Panc1 (cell line): ENCODE measurements at regions of chr7 and their contacts with region 1.

Region 1: GRCh38 chr7:31192986-31193385 is 140.9 kb downstream of the ADCYAP1R1 start:
- DNase-seq: peak; percentile 22
- ATAC-seq: peak; percentile 99
- H3K4me3 ChIP-seq: no peak overlapping the region
- H3K27ac ChIP-seq: no peak overlapping the region
- H3K4me1 ChIP-seq: no peaks in the 10 kb centered on the region
- H3K27me3 ChIP-seq: no peaks in the 10 kb centered on the region
- CTCF ChIP-seq: peak; percentile 96

Region 2: DNA sequence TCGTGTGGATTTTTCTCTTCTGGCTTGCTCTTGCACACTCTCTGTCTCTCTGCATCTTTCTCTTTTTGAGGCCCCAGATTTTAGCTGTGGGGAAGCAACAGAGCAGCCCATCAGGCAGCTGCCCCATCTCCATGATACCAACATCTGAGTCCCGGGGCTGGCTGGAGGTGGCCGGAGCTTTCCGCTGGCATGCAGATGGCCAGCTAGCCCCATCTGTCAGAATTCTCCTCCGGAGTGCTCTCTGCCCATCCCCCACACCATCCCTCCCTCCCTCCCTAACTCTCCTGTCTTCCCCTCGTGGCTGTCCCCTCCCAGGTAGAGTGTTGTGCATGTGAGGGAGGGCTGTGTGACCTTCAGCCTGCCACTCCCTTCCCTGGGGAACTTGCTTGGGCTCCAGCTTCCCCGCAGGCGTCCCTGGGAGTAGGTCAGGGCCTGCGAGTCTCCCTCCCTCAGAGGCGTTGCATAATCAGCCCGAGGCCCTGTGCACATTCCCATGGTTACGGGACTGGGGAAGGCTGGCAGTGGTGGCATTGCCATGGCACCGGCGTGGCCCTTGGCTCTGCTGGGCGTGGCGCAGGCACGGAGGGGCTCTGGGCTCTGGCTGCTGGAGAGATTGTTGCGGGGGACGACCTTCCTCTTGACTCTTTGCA is 204.5 kb before region 1 on chr7:
- CTCF ChIA-PET with region 1: no interaction called
- POLR2A ChIA-PET with region 1: no interaction called
- in situ Hi-C with region 1: no loop called
- intact Hi-C with region 1: no loop called
- DNase-seq: no peak
- ATAC-seq: no peak
- H3K4me3 ChIP-seq: no peak overlapping the region
- H3K27ac ChIP-seq: no peak overlapping the region
- H3K4me1 ChIP-seq: no peaks in the 10 kb centered on the region
- H3K27me3 ChIP-seq: no peaks in the 10 kb centered on the region; the same call in 1 of the 2 replicates
- CTCF ChIP-seq: no peak

Region 3: GRCh38 chr7:31145339-31145738 is 47.6 kb before region 1 on chr7:
- CTCF ChIA-PET with region 1: no interaction called
- POLR2A ChIA-PET with region 1: no interaction called
- in situ Hi-C with region 1: no loop called
- intact Hi-C with region 1: no loop called
- DNase-seq: no peak
- ATAC-seq: no peak
- H3K4me3 ChIP-seq: no peak overlapping the region
- H3K27ac ChIP-seq: no peak overlapping the region
- H3K4me1 ChIP-seq: no peaks in the 10 kb centered on the region
- H3K27me3 ChIP-seq: no peaks in the 10 kb centered on the region
- CTCF ChIP-seq: peak; percentile 25; the same call in 1 of the 2 replicates

Region 4: GRCh38 chr7:31443457-31443856 is 250.5 kb after region 1 on chr7:
- CTCF ChIA-PET with region 1: interaction called, 3 read pairs
- POLR2A ChIA-PET with region 1: no interaction called
- in situ Hi-C with region 1: no loop called
- intact Hi-C with region 1: loop called (anchors 10 kb)
- DNase-seq: peak; percentile 30
- ATAC-seq: peak; percentile 84
- H3K4me3 ChIP-seq: no peak overlapping the region
- H3K27ac ChIP-seq: no peak overlapping the region
- H3K4me1 ChIP-seq: no peaks in the 10 kb centered on the region
- H3K27me3 ChIP-seq: peaks cover 2% of the 10 kb centered on the region; the same call in 1 of the 2 replicates
- CTCF ChIP-seq: peak; percentile 87

Region 5: DNA sequence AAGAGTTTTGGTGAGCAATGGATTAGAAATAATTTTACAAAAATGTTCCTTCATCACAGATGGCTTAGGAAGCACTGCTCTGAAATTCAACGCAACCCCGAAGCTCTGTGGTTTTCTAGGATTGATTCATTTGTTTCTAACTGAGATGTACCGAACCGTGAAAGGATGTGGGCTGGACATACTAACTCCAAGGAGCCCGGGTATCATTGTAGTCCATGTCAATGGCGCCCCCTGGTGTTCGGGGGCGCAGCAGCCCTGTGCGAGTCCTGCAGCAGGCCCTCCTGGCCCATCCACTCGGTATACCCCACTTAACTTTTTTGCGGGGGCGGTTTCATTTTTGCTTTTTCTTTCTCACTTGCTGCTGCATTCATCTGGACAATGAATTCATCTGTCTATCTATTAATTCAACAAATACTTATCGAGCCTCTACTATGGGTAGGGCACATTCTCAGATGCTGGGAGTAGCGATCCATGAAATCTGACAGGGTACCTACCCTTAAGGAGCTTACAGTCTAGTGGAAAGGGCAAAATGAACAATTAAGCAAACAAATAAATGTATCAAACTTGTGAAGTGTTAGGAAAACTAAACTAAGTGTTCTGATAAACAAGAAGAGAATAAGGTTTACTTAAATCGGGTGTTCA is 295.7 kb after region 1 on chr7:
- CTCF ChIA-PET with region 1: no interaction called
- POLR2A ChIA-PET with region 1: no interaction called
- in situ Hi-C with region 1: no loop called
- intact Hi-C with region 1: loop called (anchors 2 kb)
- DNase-seq: peak; percentile 48
- ATAC-seq: peak; percentile 93
- H3K4me3 ChIP-seq: no peak overlapping the region
- H3K27ac ChIP-seq: no peak overlapping the region
- H3K4me1 ChIP-seq: no peaks in the 10 kb centered on the region
- H3K27me3 ChIP-seq: no peaks in the 10 kb centered on the region
- CTCF ChIP-seq: peak; percentile 90

Region 6: DNA sequence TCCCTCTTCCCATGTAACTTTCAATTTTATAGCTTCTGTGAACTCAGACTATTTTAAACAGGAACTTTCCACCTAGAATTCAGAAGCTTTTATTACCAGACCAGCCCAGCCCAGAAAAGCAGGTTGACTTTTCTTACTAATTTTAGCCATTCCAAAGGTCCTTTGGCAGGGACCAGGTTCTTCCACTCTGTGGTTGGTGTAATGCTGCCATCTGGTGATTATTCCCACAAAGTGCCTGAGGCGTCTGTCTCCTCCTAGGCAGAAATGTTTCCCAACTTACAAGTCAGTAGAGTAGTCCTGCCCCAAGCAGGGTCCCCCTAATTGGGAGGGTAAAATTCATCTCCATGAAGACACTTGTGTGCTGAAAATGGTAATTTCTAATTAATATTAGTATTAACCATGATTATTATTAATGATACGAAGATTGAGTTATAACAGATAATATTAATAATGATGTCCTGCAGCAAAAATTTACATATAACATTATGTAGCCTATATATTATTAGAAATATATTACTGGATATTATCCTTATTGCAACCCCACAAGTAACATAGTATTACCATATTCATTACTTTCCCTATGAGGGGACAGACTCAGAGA is 441.0 kb after region 1 on chr7:
- CTCF ChIA-PET with region 1: no interaction called
- POLR2A ChIA-PET with region 1: no interaction called
- in situ Hi-C with region 1: no loop called
- intact Hi-C with region 1: loop called (anchors 2 kb)
- DNase-seq: peak; percentile 54
- ATAC-seq: peak; percentile 96
- H3K4me3 ChIP-seq: no peak overlapping the region
- H3K27ac ChIP-seq: no peak overlapping the region
- H3K4me1 ChIP-seq: no peaks in the 10 kb centered on the region
- H3K27me3 ChIP-seq: no peaks in the 10 kb centered on the region
- CTCF ChIP-seq: peak; percentile 84

Region 7: DNA sequence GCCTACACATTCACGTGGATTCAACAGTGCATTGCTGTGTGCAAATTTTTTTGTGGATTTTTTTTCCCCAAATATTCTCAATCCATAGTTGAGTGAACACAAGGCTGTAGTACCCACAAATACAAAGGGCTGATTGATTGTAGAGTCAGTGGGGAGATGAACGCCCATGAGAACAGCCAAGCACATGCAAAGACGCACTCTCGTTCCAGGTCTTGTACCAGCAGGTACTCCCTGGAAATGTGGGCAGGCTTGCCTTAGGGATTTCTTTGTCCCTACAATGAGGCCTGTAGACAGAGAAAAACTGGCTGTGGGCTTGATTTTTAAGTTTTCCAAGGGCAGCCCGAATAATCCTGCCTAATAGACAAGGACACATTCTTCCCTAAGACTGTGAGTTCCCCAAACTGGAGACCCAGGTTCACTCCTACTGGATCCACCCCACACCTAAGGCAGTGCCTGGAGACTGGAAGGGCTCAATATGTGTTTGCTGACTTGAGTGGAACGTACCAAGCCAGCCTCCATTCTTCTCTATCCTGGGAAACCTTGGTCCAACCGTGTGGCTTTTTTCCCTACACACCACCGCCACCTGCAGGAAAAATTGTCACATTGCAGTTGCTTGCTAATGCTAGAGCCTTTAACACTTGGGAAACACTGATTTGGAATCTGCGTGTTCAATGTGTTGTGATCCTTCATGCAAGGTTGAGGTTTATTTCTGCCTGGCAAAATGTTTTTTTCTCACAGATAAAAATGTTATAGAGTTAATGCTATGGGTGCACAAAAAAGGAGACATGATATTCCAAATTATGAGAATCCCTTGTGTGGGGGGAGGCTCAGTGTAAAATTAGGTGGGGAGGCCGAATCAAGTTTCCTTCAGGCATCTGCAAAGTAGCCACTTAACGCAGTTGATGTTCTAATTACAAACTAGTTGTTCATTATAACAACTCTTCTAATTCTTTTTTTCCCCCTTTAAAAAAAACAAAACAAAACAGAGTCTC is 543.3 kb after region 1 on chr7:
- CTCF ChIA-PET with region 1: interaction called, 3 read pairs
- POLR2A ChIA-PET with region 1: no interaction called
- in situ Hi-C with region 1: no loop called
- intact Hi-C with region 1: loop called (anchors 5 kb)
- DNase-seq: peak; percentile 41
- ATAC-seq: peak; percentile 92
- H3K4me3 ChIP-seq: no peak overlapping the region
- H3K27ac ChIP-seq: no peak overlapping the region
- H3K4me1 ChIP-seq: no peaks in the 10 kb centered on the region
- H3K27me3 ChIP-seq: peaks cover 3% of the 10 kb centered on the region; the same call in 1 of the 2 replicates
- CTCF ChIP-seq: peak; percentile 92

Region 8: DNA sequence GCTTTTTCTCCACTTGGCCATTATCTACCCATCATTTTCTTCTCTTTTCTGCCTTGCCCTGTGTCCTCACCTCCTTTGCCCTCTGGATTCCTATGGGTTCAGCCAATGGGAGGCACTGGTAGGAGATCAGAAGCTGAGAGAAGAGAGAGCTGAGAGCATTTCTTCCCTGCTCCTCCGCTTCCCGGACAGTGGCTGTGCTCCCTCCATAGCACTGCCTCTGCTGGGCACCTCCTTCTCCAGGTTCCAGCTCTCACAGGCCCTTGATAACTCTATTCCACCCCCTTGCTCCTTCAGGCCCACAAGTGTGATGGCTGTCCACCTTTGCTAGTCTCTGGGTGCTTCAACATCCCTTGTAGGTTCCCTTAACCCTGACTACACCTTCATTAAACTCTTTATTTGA is 1217.6 kb after region 1 on chr7:
- CTCF ChIA-PET with region 1: interaction called, 19 read pairs
- POLR2A ChIA-PET with region 1: no interaction called
- in situ Hi-C with region 1: no loop called
- intact Hi-C with region 1: no loop called
- DNase-seq: no peak
- ATAC-seq: no peak
- H3K4me3 ChIP-seq: no peak overlapping the region
- H3K27ac ChIP-seq: no peak overlapping the region
- H3K4me1 ChIP-seq: no peaks in the 10 kb centered on the region
- H3K27me3 ChIP-seq: no peaks in the 10 kb centered on the region; the same call in 1 of the 2 replicates
- CTCF ChIP-seq: no peak